Endothelial cell of umbilical vein (primary cell): ENCODE measurements at regions of chr6 and their contacts with region 1.

Region 1: GRCh38 chr6:43013843-43014433 is at the starts of genes KLHDC3 and MEA1:
- DNase-seq: peak; percentile 100
- H3K4me3 ChIP-seq: peak within 1 kb of the TSS; percentile 58 to 87 (median 72)
- H3K27ac ChIP-seq: peak within 1 kb of the TSS; percentile 52
- H3K4me1 ChIP-seq: peaks cover 17% of the 10 kb centered on the region
- H3K27me3 ChIP-seq: no peaks in the 10 kb centered on the region
- CTCF ChIP-seq: no peak
- POLR2A ChIP-seq: no peak
- total RNA-seq, gene KLHDC3: 84.6 and 84.8 TPM in 2 replicates
- total RNA-seq, gene MEA1: 55.6 and 62.5 TPM in 2 replicates

Region 2: GRCh38 chr6:42928986-42929820 is 84.7 kb before region 1 on chr6 and contains the start of gene CNPY3:
- CTCF ChIA-PET with region 1: interaction called, 4 read pairs
- POLR2A ChIA-PET with region 1: interaction called, 4 read pairs
- dilution Hi-C with region 1: no loop called
- intact Hi-C with region 1: loop called (anchors 1 kb)
- DNase-seq: peak; percentile 98
- H3K4me3 ChIP-seq: peak within 1 kb of the TSS; percentile 54 to 94 (median 85)
- H3K27ac ChIP-seq: peak within 1 kb of the TSS; percentile 95
- H3K4me1 ChIP-seq: peaks cover 17% of the 10 kb centered on the region
- H3K27me3 ChIP-seq: peaks cover 0 to 3% of the 10 kb centered on the region in 2 experiments
- CTCF ChIP-seq: peak in 1 of 2 donors; percentile 7
- POLR2A ChIP-seq: no peak
- total RNA-seq, gene CNPY3: 43.3 and 53.1 TPM in 2 replicates

Region 3: DNA sequence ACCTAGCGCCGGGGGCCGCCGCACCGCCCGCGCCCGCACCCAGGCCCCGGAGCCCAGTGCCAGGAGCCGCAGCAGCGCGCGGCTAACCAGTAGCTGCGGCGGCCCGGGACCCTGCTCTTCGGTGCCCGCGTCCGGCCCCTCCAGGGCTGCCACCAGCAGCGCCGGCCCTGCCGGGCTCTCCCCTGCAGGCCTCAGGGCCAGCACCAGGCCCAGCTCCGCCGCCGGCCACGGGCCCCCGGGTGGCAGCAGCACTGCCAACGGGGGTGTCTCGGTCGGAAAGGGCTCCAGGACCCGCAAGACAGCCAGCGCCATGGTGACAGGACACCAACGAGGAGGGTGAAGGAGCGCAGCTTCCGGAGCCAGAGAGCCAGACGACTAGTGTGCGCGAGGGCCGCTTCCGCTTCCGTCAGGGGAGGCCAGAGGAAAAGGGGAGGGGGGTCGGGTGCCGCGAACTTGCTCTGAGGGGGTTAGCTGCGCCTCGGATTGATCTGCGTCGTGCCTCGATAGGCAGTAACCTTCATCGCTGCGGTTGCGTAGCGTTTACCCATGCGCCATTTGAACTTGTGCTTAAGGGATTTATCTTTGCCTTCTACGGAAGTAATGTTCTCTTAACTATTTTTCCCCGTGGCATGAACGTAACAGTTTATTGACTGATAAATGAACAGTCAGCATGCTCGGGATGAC is 35.0 kb before region 1 on chr6 and contains the start of gene PEX6:
- CTCF ChIA-PET with region 1: interaction called, 3 read pairs
- POLR2A ChIA-PET with region 1: interaction called, 6 read pairs
- dilution Hi-C with region 1: no loop called
- intact Hi-C with region 1: loop called (anchors 1 kb)
- DNase-seq: peak; percentile 83
- H3K4me3 ChIP-seq: peak within 1 kb of the TSS; percentile 62 to 74 (median 72)
- H3K27ac ChIP-seq: peak within 1 kb of the TSS; percentile 58
- H3K4me1 ChIP-seq: peaks cover 28% of the 10 kb centered on the region
- H3K27me3 ChIP-seq: no peaks in the 10 kb centered on the region
- CTCF ChIP-seq: no peak
- POLR2A ChIP-seq: peak; percentile 83
- total RNA-seq, gene PEX6: 9.9 and 18.1 TPM in 2 replicates

Region 4: GRCh38 chr6:43053545-43054205 is 39.7 kb after region 1 on chr6 and contains the start of gene CUL7:
- CTCF ChIA-PET with region 1: interaction called, 5 read pairs
- POLR2A ChIA-PET with region 1: interaction called, 7 read pairs
- dilution Hi-C with region 1: no loop called
- intact Hi-C with region 1: loop called (anchors 1 kb)
- DNase-seq: peak; percentile 95
- H3K4me3 ChIP-seq: peak within 1 kb of the TSS; percentile 30 to 64 (median 40)
- H3K27ac ChIP-seq: peak within 1 kb of the TSS; percentile 82
- H3K4me1 ChIP-seq: peaks cover 16% of the 10 kb centered on the region
- H3K27me3 ChIP-seq: no peaks in the 10 kb centered on the region
- CTCF ChIP-seq: no peak
- POLR2A ChIP-seq: peak; percentile 99
- total RNA-seq, gene CUL7: 29.4 and 29.7 TPM in 2 replicates

Region 5: DNA sequence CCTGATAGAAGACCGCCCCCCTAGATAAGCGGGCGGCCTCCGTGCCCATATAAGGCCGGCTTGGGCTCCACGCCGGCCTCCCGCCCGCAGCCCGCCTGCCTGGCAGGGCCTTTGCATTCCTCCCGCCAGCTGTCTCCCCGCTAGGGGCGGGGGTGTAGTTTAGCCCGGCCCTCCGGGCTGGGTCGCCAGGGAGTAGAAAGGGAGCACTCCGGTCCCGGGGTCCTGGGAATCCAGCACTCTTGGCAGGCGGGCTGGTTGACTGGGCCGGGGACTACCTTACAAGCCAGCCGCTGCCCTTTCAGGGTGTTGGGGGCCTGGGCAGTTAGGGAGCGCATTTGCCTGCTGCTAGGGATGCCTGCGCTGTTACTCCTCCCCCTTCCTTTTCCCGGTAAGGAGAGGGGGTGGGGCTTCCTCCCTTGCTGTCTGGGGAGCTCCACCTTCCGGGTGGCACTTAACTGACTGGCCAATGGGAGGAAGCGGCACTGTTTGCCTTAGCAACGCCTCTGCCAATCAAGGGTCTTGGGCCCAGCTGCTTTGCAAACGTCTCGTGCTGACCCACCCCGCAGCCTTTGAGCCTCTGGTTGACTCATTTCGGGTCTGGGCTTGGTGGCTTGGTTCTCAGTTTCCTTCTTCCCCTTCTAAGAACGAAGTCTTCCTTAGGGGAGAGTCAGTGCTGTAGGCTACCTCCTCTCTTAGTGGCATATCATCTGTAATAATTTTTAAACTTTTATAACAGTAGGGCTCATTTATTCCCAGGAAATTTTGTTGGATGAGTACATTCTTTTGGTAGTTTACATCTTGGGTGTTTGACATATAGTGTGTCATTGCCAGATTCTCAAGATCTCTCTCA is 160.6 kb after region 1 on chr6:
- CTCF ChIA-PET with region 1: no interaction called
- POLR2A ChIA-PET with region 1: no interaction called
- dilution Hi-C with region 1: no loop called
- intact Hi-C with region 1: loop called (anchors 1 kb)
- DNase-seq: peak; percentile 99
- H3K4me3 ChIP-seq: peak overlapping the region in 2 of 3 experiments; percentile 40 to 41
- H3K27ac ChIP-seq: peak overlapping the region; percentile 76
- H3K4me1 ChIP-seq: peaks cover 25% of the 10 kb centered on the region
- H3K27me3 ChIP-seq: no peaks in the 10 kb centered on the region
- CTCF ChIP-seq: peak in 1 of 2 donors; percentile 28
- POLR2A ChIP-seq: peak; percentile 78